Motor neuron (in vitro differentiated cells): ENCODE measurements at regions of chr13 and their contacts with region 1.

Region 1: DNA sequence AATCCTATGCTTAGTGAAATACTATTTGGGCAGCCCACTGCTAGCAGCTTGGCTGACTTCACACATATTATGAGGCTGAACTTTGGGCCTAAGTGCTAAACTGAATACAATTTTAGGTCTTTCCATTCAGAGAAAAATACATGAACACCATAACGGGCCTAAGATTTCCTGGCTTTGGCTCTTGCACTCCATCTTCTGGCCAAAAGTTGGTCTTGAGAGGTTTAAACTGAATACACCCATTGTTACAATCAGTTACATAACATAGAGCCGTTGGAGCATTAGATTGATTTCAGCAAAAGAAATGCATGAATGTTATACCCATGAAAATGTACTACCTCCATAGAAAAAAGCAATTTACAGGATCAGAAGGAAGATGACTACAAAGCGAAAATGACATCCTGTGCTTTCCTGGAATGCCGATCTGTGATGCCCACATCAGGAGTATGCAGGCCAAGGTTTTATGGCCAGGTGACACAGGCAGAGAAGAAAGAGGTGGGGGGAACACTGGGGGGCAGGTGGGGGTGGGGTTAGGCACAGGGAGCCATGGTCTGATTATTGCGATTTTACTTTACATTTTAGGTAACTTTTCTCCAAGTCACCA is 11.1 kb upstream of the SHISA2 start:
- ATAC-seq: peak; percentile 54 to 85 (median 74)
- H3K4me3 ChIP-seq: no peak overlapping the region
- H3K27ac ChIP-seq: no peak overlapping the region
- H3K4me1 ChIP-seq: no peaks in the 10 kb centered on the region

Region 2: DNA sequence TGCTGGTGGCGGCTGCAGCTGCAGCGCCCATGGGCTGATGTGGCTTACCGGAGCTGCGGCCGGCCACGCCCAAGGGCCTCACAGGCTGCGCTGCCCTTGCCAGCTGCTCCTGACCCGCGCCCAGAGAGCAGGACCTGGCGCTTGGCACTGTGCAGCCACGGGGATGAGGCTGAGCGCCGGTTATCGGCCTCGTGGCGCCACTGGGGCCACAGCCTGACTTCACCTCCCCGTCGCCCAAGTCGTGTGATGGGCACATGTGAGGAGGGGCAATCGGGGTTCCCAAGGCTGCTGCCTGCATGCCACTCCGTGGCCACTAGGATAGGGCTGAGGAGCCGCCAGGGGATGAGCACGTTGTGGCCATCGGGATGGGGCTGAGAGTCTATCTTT is 1044.2 kb before region 1 on chr13:
- in situ Hi-C with region 1: loop called in 2 of 9 experiments (anchors 25 kb)
- ATAC-seq: no peak
- H3K4me3 ChIP-seq: peak overlapping the region in 4 of 5 donors; percentile 28 to 39 (median 36)
- H3K27ac ChIP-seq: no peak overlapping the region
- H3K4me1 ChIP-seq: no peaks in the 10 kb centered on the region

Region 3: GRCh38 chr13:25574437-25575411 is 488.2 kb before region 1 on chr13:
- in situ Hi-C with region 1: loop called (anchors 5 to 25 kb)
- ATAC-seq: peak; percentile 95 to 99 (median 99)
- H3K4me3 ChIP-seq: no peak overlapping the region
- H3K27ac ChIP-seq: no peak overlapping the region
- H3K4me1 ChIP-seq: no peaks in the 10 kb centered on the region

Region 4: DNA sequence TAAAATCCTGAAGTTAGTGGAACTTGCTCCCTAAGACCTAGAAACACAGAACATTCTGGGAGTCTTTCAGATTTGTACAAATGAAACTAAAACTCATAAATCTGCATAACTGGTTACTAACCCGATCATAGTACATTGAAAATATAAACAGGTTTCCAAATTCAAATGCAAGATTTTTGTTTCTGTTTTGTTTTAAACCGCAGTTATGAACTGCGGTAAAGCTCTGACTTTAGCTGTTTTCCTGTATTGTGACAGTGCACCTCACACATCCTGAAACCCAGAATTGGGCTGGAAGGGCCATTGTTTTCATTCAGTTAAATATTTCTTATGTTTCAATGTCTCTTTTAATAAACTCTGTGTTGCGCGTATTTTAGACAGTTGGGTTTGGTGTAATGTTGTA is 215.8 kb before region 1 on chr13:
- in situ Hi-C with region 1: loop called in 1 of 9 experiments (anchors 25 kb)
- ATAC-seq: no peak
- H3K4me3 ChIP-seq: no peak overlapping the region
- H3K27ac ChIP-seq: no peak overlapping the region
- H3K4me1 ChIP-seq: no peaks in the 10 kb centered on the region